Transverse colon (tissue), 4 donors: ENCODE measurements at regions of chr17 and their contacts with region 1.

Region 1: GRCh38 chr17:68909066-68909465 is 46.1 kb downstream of the ABCA8 start:
- DNase-seq: peak; percentile 20
- H3K4me3 ChIP-seq: no peak overlapping the region
- H3K27ac ChIP-seq: peak overlapping the region; percentile 45 to 67 (median 61)
- H3K4me1 ChIP-seq: peaks cover 0 to 17% (median 7%) of the 10 kb centered on the region in 4 donors
- H3K27me3 ChIP-seq: no peaks in the 10 kb centered on the region
- CTCF ChIP-seq: no peak
- EP300 ChIP-seq: no peak
- POLR2A ChIP-seq: no peak

Region 2: GRCh38 chr17:68878226-68878885 is 30.7 kb before region 1 on chr17:
- in situ Hi-C with region 1: no loop called
- intact Hi-C with region 1: loop called (anchors 1 kb)
- DNase-seq: no peak
- H3K4me3 ChIP-seq: no peak overlapping the region
- H3K27ac ChIP-seq: no peak overlapping the region
- H3K4me1 ChIP-seq: no peaks in the 10 kb centered on the region
- H3K27me3 ChIP-seq: no peaks in the 10 kb centered on the region
- CTCF ChIP-seq: no peak
- EP300 ChIP-seq: no peak
- POLR2A ChIP-seq: no peak

Region 3: DNA sequence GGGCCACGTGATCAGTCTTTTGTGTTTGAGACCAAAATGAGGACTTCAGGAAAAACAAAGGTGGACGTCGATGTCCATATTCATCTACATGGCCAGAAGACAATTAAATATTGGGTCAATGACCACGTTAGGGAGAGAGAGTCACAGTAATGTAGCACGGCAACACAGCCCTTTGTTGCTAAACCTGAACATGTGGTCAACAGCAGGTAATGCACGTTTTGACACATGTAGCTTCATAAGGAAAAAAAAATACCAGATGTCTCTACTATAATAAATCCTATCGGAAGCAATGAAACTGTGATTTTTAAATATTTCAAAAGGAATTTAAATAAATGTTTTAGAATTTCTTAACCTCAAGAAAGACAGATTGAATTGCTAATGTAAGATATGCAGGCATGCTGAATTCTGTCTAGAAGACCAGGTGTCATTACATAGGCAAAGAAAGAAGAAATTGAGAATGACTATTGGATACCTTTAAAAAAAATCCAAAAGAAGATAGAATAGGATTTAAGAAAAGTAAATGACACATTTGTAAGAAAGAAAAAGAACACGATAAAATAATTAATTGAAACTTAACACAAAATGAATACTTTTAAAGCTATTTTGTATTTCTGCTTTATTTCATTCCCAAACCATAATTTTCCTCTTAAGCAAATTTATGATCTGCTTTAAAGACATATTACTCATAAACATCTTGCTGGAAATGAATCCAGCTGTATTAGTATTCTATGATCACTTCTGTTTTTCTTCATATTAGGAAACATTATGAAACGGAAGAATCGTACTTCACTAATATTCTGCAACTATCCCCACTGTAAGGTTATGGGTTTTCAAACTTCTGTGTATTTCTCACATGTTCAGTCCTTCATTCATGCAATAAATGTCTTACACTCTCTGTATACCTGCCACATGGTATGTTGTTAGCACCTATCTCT is 16.0 kb after region 1 on chr17:
- in situ Hi-C with region 1: no loop called
- intact Hi-C with region 1: loop called (anchors 1 kb)
- DNase-seq: no peak
- H3K4me3 ChIP-seq: no peak overlapping the region
- H3K27ac ChIP-seq: no peak overlapping the region
- H3K4me1 ChIP-seq: no peaks in the 10 kb centered on the region
- H3K27me3 ChIP-seq: no peaks in the 10 kb centered on the region
- CTCF ChIP-seq: no peak
- EP300 ChIP-seq: no peak
- POLR2A ChIP-seq: no peak

Region 4: GRCh38 chr17:69030145-69030544 is 121.1 kb after region 1 on chr17:
- in situ Hi-C with region 1: no loop called
- intact Hi-C with region 1: no loop called
- DNase-seq: no peak
- H3K4me3 ChIP-seq: no peak overlapping the region
- H3K27ac ChIP-seq: no peak overlapping the region
- H3K4me1 ChIP-seq: no peaks in the 10 kb centered on the region
- H3K27me3 ChIP-seq: no peaks in the 10 kb centered on the region
- CTCF ChIP-seq: no peak
- EP300 ChIP-seq: no peak
- POLR2A ChIP-seq: no peak